ENCODE measurements at regions of chr22 and their contacts with region 1.

Region 1: GRCh38 chr22:19730655-19731360 is 7.5 kb downstream of the GP1BB start:
- DNase-seq: peak; percentile 56
- H3K4me3 ChIP-seq: peak overlapping the region; percentile 61
- H3K27ac ChIP-seq: no peak overlapping the region
- H3K27me3 ChIP-seq: no peaks in the 10 kb centered on the region
- CTCF ChIP-seq: peak; percentile 93

Region 2: DNA sequence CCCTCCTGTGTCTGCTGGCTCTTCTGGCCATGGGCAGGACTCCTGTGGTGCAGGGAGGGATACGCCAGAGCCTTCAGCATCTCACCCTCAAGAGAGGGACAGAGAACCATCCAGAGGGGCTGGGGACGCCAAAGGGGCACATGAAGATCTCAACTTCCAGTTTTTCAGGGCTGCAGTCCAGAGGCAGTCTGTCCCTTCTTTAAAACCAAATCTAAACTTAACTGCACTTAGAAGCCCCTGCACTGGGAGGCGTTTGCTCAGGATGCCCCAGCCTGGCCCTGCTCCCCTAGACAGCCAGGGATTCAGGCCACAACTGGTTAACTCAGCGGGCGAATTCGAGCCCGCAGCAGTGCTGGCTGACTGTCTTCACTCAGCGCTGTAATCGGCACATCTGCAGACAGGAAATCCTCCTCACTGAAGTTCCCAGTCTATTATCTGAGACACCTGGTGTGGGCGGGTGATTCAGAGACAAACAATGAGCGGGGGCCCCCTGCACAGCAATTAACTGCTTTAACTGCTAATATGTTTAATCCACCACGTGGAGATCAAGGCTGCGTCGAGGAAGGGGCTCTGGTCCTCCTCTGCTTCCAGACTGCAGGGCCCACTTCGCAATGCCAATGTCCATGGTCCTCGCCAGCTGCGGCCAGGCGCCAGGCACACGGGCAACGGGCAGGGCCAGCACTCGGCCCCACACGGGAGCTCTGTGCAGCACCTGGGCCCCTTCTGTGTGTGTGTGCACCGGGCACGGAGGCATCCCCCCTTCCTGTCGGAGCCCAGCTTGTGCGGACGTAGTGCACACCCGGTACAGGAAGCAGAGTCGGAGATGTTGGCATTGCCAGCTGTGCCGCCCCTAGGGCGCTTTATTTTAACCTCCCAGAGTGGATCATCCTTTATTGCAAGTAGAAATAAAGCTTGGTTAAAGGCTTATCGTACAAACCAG is 160.8 kb after region 1 on chr22:
- CTCF ChIA-PET with region 1: interaction called, 13 read pairs
- POLR2A ChIA-PET with region 1: no interaction called
- DNase-seq: peak; percentile 59
- H3K4me3 ChIP-seq: peak overlapping the region; percentile 25
- H3K27ac ChIP-seq: peak overlapping the region; percentile 88
- H3K27me3 ChIP-seq: no peaks in the 10 kb centered on the region
- CTCF ChIP-seq: no peak

Region 3: GRCh38 chr22:19903031-19903430 is 172.2 kb after region 1 on chr22:
- CTCF ChIA-PET with region 1: interaction called, 49 read pairs
- POLR2A ChIA-PET with region 1: interaction called, 4 read pairs
- DNase-seq: no peak
- H3K4me3 ChIP-seq: no peak overlapping the region
- H3K27ac ChIP-seq: no peak overlapping the region
- H3K27me3 ChIP-seq: no peaks in the 10 kb centered on the region
- CTCF ChIP-seq: no peak

Region 4: DNA sequence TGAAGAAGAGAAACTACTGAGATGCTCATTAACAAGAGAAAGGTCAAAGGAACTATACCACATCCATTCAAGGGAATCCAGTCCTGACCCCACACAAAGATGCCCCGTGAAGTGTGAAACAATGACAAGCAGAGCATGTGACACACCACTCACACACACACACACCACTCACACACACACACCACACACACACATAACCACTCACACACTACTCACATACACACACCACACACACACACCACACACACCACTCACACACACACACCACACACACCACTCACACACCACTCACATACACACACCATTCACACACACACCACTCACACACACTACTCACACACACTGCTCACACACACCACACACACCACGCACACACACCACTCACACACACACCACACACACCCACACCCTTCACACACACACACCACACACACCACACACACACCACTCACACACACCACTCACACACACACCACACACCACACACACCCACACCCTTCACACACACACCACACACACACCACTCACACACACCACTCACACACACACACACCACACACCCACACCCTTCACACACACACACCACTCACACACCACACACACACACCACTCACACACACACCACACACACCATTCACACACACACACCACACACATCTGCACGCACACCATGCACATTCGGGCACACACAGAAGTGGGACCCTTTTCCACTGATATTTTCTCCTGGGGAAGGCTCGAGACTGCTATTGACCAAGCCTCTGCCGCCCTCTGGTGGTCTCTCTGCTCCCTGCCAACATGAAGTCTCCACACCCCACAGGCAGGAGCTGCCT is 178.8 kb after region 1 on chr22:
- CTCF ChIA-PET with region 1: interaction called, 133 read pairs
- POLR2A ChIA-PET with region 1: interaction called, 6 read pairs
- DNase-seq: peak; percentile 48
- H3K4me3 ChIP-seq: no peak overlapping the region
- H3K27ac ChIP-seq: no peak overlapping the region
- H3K27me3 ChIP-seq: no peaks in the 10 kb centered on the region
- CTCF ChIP-seq: peak; percentile 90

Region 5: DNA sequence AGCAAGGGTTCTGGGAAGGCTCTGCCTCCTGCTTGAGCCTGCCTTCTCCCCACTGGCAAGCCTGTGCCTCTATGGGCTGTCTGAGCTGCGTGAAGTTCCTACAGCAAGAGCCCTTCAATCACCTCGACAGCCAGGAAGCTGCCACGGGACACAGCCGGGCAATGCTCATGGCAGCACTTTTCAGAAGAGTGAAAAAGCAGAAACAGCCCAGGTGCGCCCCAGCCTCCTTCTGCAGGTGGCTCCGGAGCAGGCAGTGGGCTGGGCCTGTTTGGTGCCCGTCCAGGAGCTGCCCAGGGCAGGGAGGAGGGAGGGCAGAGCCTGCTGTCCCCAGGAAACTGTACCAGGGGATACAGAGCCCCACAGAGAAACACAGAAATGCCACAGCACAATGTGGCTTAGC is 186.1 kb after region 1 on chr22:
- CTCF ChIA-PET with region 1: interaction called, 133 read pairs
- POLR2A ChIA-PET with region 1: no interaction called
- DNase-seq: no peak
- H3K4me3 ChIP-seq: no peak overlapping the region
- H3K27ac ChIP-seq: no peak overlapping the region
- H3K27me3 ChIP-seq: no peaks in the 10 kb centered on the region
- CTCF ChIP-seq: no peak

Region 6: DNA sequence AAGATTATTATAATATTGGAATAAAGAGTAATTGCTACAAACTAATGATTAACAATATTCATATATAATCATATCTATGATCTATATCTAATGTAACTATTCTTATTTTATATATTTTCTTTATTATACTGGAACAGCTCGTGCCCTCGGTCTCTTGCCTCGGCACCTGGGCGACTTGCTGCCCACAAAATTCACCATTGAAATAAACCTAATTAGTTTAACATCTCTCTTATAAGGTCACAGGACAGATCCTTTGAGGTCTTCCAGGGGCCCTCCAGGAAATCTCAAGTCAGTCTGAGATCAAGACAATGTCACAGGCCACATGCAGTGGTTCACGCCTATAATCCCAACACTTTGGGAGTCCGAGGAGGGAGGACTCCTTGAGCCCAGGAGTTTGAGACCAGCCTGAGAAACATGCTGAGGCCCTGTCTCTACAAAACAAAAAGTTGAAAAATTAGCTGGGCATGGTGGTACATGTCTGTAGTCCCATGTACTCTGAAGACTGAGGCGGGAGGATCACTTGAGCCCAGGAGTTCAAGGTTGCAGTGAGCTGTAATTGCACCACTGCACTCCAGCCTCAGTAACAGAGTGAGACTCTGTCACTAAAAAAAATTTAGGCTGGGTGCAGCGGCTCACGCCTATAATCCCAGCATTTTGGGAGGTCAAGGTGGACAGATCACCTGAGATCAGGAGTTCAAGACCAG is 217.4 kb after region 1 on chr22:
- CTCF ChIA-PET with region 1: interaction called, 22 read pairs
- POLR2A ChIA-PET with region 1: no interaction called
- DNase-seq: no peak
- H3K4me3 ChIP-seq: no peak overlapping the region
- H3K27ac ChIP-seq: peak overlapping the region; percentile 40
- H3K27me3 ChIP-seq: no peaks in the 10 kb centered on the region
- CTCF ChIP-seq: no peak

Region 7: DNA sequence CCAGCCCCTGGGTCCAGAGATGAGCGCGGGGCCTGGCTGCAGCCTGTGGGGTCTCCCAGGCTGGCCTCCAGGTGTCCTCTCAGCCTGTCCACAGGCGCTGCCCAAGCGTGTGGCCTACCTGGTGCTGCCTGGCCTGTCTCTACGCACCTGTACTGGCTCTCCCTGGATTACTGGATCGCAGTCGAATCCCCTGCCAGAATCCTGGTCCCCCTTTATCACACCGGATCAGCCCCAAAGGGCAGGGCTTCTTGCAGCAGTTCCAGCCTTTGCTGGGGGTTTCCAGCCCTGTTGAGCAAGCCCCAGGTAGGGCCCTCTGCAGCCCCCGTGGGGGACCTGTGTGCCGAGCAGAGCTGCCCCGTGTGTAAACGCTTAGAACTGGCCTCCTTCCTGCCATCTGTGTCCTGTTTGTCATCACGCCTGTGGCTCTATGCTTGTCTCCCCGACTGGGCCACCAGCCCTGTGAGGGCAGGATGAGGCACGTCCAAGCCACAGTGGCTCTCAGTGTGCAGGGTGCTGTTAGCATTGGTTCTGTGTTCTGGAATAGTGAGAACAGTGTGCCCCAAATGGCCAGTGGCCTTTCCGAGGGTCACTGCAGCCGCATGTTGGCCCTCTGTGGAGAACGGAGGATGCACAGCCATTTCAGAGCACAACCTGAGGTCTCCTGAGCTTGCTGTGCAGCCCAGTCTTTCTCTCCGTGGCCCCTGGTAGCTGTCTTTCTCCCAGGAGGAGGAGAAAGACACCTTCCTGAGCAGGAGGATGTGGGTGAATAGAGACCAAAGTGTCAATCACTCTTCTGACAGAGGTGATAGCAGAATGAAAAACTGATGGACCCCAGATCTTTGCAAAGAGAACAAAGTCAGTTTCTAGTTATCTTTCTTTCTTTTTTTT is 224.7 kb after region 1 on chr22:
- CTCF ChIA-PET with region 1: interaction called, 10 read pairs
- POLR2A ChIA-PET with region 1: no interaction called
- DNase-seq: no peak
- H3K4me3 ChIP-seq: no peak overlapping the region
- H3K27ac ChIP-seq: no peak overlapping the region
- H3K27me3 ChIP-seq: no peaks in the 10 kb centered on the region
- CTCF ChIP-seq: no peak